Cardiac septum (tissue), 1 donor: ENCODE measurements at regions of chr14 and their contacts with region 1.

Region 1: DNA sequence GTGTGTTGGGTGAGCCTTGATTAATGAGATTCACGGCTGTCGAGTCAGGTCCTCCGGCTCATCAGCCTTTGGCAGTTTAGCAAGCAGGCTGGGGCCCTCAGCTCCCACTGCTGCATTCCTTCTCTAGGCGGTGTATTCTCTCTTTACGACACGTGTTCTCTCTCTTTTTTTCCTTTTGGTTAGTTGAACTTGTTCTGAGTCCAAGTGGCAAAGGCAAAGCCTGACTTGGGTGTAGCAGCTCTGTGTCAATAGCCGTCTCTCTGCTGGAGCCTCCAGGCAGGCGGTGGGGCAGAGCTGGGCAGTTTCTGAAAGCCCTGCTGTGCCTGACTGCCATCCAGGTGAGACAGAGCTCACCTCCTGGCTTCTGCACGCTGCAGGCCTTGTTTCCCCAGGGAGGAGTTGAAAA is 46.6 kb downstream of the SUSD6 start:
- DNase-seq: no peak

Region 2: DNA sequence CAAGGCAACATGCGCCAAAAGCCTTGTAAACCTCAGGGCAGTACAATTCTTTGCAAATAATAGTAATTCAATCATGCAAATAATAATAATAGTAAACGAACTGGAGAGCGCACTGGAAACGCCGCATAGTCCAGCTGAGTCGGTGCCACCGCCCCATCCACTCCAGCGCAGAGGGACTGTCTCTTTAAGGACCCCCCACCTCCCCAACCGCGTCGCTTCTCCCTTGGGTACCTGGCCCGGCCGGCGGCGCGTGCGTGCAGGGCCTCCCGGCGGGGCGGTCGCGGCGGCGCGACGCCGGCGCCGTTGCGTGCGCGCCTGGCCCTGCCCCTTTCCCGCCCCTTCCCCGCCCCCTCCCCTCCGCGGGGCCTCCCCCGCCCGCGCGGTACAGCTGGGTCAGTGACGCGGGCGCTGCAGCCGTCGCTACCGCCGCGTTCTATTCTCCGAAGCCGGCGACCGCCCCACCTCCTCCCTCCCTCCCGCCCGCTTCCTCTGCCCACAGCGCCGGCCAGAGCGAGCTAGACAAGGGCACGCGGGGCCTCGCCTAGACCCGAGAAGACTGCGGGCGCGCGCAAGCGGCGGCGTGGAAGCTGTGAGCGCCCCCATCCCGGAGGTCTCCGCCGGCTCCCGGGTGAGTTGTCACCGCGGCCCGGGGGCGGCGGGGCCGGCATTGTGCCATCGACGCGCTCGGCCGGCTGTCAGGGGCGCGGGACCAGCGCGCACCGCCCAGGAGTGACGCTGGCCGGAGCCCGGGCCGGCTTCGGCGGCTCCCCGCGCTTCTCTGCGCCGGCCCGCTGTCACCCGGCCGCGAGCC is 46.5 kb before region 1 on chr14 and contains the start of gene SUSD6:
- intact Hi-C with region 1: loop called (anchors 5 kb)
- DNase-seq: peak; percentile 97
- total RNA-seq, gene SUSD6: 26.9 TPM